HEK293T (cell line): ENCODE measurements at regions of chr6 and their contacts with region 1.

Region 1: GRCh38 chr6:32838114-32838958 is at the start of gene TAP2:
- DNase-seq: peak; percentile 93

Region 2: DNA sequence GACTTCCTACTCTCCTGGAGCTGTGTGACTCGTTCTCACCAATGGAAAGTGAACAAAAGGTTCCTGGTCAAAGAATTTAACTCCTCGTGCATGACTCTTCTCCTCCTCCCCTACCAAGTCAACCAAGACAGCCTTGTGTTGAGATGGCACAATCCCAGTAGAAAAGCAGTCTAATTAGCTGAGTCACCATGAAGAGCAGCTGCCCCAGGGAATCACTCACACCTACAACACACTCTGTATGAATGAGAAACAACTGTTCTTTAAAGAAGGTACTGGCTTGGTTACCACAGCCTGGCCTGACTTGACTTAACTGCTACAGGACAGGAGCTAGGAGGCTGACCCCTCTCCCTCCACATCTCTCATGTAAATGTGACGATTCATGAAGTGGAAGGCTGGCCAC is 18.6 kb before region 1 on chr6:
- CTCF ChIA-PET with region 1: interaction called, 14 read pairs
- POLR2A ChIA-PET with region 1: interaction called, 13 read pairs
- DNase-seq: no peak

Region 3: DNA sequence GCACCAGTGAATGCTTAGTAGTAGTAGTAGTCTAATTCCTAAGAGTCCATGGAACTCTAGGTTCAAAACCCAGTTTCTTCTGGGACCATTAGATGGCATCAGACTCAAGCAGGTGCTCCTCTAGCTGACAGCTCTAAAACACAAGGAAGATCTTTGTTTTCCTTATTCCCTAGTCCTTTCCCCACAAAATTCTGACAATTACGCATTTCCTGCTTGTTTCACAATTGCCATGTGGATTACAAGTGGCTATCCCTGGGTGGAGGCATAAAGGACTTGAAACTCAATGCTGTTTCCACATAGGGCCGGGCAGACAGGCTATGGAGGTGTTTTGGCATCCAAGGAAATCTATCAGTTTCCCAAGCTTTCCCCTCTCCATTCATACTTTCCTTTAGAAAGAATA is 12.4 kb before region 1 on chr6:
- CTCF ChIA-PET with region 1: interaction called, 25 read pairs
- POLR2A ChIA-PET with region 1: interaction called, 15 read pairs
- DNase-seq: no peak

Region 4: GRCh38 chr6:32853541-32854375 is 15.4 kb after region 1 on chr6 and contains the starts of genes PSMB9 and TAP1:
- CTCF ChIA-PET with region 1: interaction called, 41 read pairs
- POLR2A ChIA-PET with region 1: interaction called, 54 read pairs
- DNase-seq: peak; percentile 97

Region 5: DNA sequence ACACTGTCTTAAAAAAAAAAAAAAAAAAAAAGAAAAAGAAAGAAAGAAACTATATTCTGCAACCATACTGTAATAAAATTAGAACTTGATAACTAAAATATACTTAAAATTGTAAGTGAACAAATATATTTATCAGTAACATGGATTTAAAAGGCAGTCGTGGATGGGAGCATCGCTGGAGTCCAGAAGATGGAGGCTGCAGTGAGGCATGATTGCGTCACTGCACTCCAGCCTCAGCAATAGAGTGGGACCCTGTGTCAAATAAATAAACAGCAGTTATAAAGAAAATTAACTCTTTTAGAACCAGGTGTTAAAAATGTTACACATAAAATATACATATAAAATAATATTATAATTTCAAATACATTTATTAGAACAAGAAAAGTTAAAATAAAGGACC is 24.4 kb after region 1 on chr6:
- CTCF ChIA-PET with region 1: interaction called, 74 read pairs
- POLR2A ChIA-PET with region 1: interaction called, 54 read pairs
- DNase-seq: no peak

Region 6: GRCh38 chr6:32868257-32868788 is 30.0 kb after region 1 on chr6:
- CTCF ChIA-PET with region 1: interaction called, 74 read pairs
- POLR2A ChIA-PET with region 1: interaction called, 32 read pairs
- DNase-seq: peak; percentile 60